CD8-positive, alpha-beta T cell (primary cell): ENCODE measurements at regions of chr7 and their contacts with region 1.

Region 1: DNA sequence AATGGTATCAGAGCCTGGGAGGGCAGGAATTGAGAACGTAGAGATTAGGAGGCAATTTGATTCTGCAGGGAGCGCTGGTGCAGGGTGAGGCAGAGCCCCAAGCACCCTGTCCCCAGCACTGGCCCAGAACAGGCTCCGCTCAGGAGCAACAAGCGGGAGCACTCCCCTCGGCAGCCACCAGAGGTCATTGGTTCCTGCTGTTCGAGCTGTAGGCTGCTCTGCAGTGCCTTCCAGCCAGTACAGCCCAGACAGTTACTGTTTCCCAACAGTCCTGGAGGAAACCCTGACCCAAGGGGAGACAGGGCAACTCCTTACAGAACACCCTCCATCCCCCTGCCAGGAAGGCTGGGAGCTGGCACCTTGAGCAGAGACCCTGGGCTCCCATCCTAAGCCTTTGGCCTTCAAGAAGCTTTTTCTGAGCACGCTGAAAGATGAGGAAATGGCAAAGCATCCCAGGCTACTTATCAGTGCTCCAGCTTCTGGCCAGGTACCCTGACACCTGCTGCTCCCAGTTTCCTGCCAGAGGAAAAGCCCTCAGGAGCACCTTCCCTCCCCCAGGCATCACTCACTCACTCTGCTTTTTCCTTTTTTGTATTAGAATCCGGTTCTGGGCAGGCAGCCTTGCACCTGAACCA is 71.2 kb upstream of the EFCAB10 start:
- DNase-seq: peak; percentile 34 to 73 (median 70)
- ATAC-seq: peak; percentile 92
- H3K4me3 ChIP-seq: no peak overlapping the region
- H3K4me3 Mint-ChIP-seq: no peak overlapping the region
- H3K27ac ChIP-seq: no peak overlapping the region
- H3K27ac Mint-ChIP-seq: no peak overlapping the region
- H3K4me1 ChIP-seq: no peaks in the 10 kb centered on the region
- H3K4me1 Mint-ChIP-seq: peaks cover 5% of the 10 kb centered on the region
- H3K27me3 ChIP-seq: no peaks in the 10 kb centered on the region
- H3K27me3 Mint-ChIP-seq: no peaks in the 10 kb centered on the region
- CTCF ChIP-seq: peak; percentile 70

Region 2: DNA sequence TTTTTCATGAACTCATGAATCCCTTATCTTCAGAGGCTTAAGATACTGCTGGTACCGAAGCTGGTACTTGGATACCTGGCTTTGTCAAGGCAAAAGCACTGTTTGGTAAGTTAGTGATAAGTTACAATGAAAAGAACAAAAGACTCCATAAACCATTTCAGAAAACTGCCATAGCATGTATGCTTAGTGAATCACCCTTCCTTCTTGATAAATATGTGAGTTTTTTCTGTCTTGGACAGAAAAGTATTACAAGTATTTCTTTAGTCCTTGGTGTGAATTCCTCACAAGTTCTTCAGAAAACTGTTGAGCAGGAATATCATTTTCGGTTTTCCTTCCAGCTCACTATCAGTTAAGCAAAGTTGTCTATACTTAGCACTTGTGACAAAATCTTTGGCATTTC is 156.0 kb before region 1 on chr7:
- CTCF ChIA-PET with region 1: no interaction called
- POLR2A ChIA-PET with region 1: no interaction called
- intact Hi-C with region 1: no loop called
- DNase-seq: no peak
- ATAC-seq: no peak
- H3K4me3 ChIP-seq: no peak overlapping the region
- H3K4me3 Mint-ChIP-seq: no peak overlapping the region
- H3K27ac ChIP-seq: no peak overlapping the region
- H3K27ac Mint-ChIP-seq: no peak overlapping the region
- H3K4me1 ChIP-seq: no peaks in the 10 kb centered on the region
- H3K4me1 Mint-ChIP-seq: no peaks in the 10 kb centered on the region
- H3K27me3 ChIP-seq: no peaks in the 10 kb centered on the region
- H3K27me3 Mint-ChIP-seq: no peaks in the 10 kb centered on the region
- CTCF ChIP-seq: no peak

Region 3: DNA sequence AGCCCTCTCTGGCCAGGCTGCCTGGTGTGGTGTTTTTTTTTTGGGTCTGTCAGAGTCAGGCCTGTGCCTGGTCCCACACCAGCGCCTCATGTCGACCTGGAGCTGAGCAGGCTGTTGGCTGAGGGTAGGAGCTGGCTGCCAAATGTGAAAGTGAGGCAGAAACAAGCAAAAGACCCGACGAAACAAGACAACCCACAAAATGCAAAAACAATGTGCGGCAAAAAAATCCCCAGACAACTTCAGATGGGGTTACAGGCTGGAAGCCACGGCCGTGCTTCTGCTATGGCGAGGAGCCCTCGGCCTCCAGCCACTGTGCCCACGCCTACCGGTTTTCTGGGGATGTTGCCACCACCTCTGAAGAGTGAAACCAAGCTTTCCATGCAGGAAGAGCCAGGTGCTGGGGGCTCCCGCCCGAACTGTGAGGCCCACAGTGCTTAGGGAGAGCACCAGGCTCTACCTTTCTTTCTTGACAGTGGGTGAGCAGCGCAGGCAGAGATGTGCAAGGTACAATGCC is 11.1 kb before region 1 on chr7:
- CTCF ChIA-PET with region 1: interaction called, 14 read pairs
- POLR2A ChIA-PET with region 1: no interaction called
- intact Hi-C with region 1: no loop called
- DNase-seq: peak in 1 of 9 experiments; percentile 8
- ATAC-seq: no peak
- H3K4me3 ChIP-seq: no peak overlapping the region
- H3K4me3 Mint-ChIP-seq: no peak overlapping the region
- H3K27ac ChIP-seq: no peak overlapping the region
- H3K27ac Mint-ChIP-seq: no peak overlapping the region
- H3K4me1 ChIP-seq: no peaks in the 10 kb centered on the region
- H3K4me1 Mint-ChIP-seq: no peaks in the 10 kb centered on the region
- H3K27me3 ChIP-seq: no peaks in the 10 kb centered on the region
- H3K27me3 Mint-ChIP-seq: no peaks in the 10 kb centered on the region
- CTCF ChIP-seq: no peak

Region 4: DNA sequence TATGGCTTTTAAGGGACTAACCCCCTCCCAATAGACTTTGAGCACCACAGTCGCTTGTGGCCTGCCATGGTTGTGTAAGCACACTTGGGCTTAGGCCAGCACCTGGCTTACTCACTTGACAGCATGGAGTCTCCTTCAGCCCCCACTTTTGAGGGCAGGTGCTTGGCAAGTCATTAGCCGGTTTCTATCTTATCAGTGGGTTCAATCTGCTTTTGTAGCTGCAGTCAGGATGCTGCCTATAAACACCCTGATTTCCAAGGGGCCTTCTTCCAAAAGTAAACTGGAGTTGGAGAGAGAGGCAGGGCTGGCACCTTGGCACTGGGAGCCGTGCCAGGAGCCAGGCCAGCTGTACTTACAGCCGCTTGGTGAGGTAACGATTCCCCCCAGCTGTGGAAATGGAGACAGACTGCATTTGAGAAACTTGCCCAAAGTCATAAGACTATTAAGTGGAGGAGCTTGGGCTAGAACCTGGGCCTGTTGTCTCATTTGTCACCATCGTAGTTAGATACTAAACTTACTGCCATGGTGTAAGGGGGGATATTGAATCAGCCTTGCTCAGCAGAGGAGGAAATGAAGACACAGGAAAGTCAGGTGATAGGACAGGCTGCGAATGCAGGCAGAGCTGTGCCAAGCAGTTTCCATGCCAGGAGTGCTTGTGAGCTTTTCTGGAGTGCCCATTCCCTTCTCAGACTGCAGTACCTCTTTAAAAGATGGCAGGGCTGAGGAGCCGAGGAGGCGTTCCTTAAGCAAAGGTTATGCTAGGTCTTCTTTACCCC is 21.1 kb after region 1 on chr7:
- CTCF ChIA-PET with region 1: interaction called, 16 read pairs
- POLR2A ChIA-PET with region 1: interaction called, 3 read pairs
- intact Hi-C with region 1: no loop called
- DNase-seq: no peak
- ATAC-seq: no peak
- H3K4me3 ChIP-seq: no peak overlapping the region
- H3K4me3 Mint-ChIP-seq: no peak overlapping the region
- H3K27ac ChIP-seq: peak overlapping the region in 1 of 2 experiments; percentile 15
- H3K27ac Mint-ChIP-seq: peak overlapping the region; percentile 71
- H3K4me1 ChIP-seq: peaks cover 37% of the 10 kb centered on the region
- H3K4me1 Mint-ChIP-seq: peaks cover 58% of the 10 kb centered on the region
- H3K27me3 ChIP-seq: no peaks in the 10 kb centered on the region
- H3K27me3 Mint-ChIP-seq: no peaks in the 10 kb centered on the region
- CTCF ChIP-seq: no peak

Region 5: GRCh38 chr7:105691733-105692564 is 39.5 kb after region 1 on chr7:
- CTCF ChIA-PET with region 1: interaction called, 6 read pairs
- POLR2A ChIA-PET with region 1: no interaction called
- intact Hi-C with region 1: loop called in 1 of 2 experiments (anchors 5 kb)
- DNase-seq: peak; percentile 45 to 91 (median 71)
- ATAC-seq: peak; percentile 75
- H3K4me3 ChIP-seq: peak overlapping the region; percentile 69 to 72
- H3K4me3 Mint-ChIP-seq: peak overlapping the region; percentile 93
- H3K27ac ChIP-seq: peak overlapping the region; percentile 85 to 96
- H3K27ac Mint-ChIP-seq: peak overlapping the region; percentile 98
- H3K4me1 ChIP-seq: peaks cover 34% of the 10 kb centered on the region
- H3K4me1 Mint-ChIP-seq: peaks cover 64% of the 10 kb centered on the region
- H3K27me3 ChIP-seq: no peaks in the 10 kb centered on the region
- H3K27me3 Mint-ChIP-seq: no peaks in the 10 kb centered on the region
- CTCF ChIP-seq: no peak

Region 6: GRCh38 chr7:105752671-105753275 is 100.3 kb after region 1 on chr7:
- CTCF ChIA-PET with region 1: interaction called, 13 read pairs
- POLR2A ChIA-PET with region 1: no interaction called
- intact Hi-C with region 1: loop called in 1 of 2 experiments (anchors 5 kb)
- DNase-seq: no peak
- ATAC-seq: no peak
- H3K4me3 ChIP-seq: no peak overlapping the region
- H3K4me3 Mint-ChIP-seq: no peak overlapping the region
- H3K27ac ChIP-seq: no peak overlapping the region
- H3K27ac Mint-ChIP-seq: no peak overlapping the region
- H3K4me1 ChIP-seq: no peaks in the 10 kb centered on the region
- H3K4me1 Mint-ChIP-seq: no peaks in the 10 kb centered on the region
- H3K27me3 ChIP-seq: no peaks in the 10 kb centered on the region
- H3K27me3 Mint-ChIP-seq: no peaks in the 10 kb centered on the region
- CTCF ChIP-seq: no peak

Region 7: DNA sequence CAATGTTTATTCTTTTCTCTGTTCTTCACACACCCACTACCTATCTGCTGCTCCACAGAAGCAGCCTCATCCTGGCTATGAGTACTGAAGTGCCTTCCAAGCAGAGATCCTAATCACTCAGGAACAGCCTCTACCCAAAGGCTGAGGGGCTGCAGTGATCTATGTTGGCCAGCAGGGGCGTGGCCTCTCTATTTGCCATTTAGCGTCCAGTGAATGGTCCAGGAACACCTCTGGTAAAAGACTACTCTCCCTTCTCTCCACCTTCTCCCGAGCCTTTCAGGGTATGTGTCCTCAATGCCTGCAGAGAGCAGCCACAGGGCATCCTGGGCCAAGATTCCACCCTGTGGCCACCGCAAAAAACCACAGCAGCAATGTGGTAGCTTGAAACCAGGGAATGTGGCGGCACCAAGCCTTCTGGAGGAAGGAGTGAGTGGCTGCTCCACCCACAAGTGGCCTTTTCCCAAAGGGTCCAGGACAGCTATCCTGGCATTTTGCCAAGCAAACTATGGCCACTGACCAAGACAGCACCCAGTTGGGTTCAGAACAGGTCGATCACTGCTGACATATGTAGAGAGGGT is 388.8 kb after region 1 on chr7:
- CTCF ChIA-PET with region 1: interaction called, 114 read pairs
- POLR2A ChIA-PET with region 1: no interaction called
- intact Hi-C with region 1: loop called (anchors 1 kb)
- DNase-seq: peak in 3 of 9 experiments; percentile 40 to 59 (median 51)
- ATAC-seq: peak; percentile 32
- H3K4me3 ChIP-seq: no peak overlapping the region
- H3K4me3 Mint-ChIP-seq: peak overlapping the region; percentile 6
- H3K27ac ChIP-seq: no peak overlapping the region
- H3K27ac Mint-ChIP-seq: peak overlapping the region; percentile 68
- H3K4me1 ChIP-seq: peaks cover 28% of the 10 kb centered on the region
- H3K4me1 Mint-ChIP-seq: peaks cover 39% of the 10 kb centered on the region
- H3K27me3 ChIP-seq: no peaks in the 10 kb centered on the region
- H3K27me3 Mint-ChIP-seq: no peaks in the 10 kb centered on the region
- CTCF ChIP-seq: peak; percentile 61

Region 8: GRCh38 chr7:107051376-107051775 is 1398.9 kb after region 1 on chr7:
- CTCF ChIA-PET with region 1: no interaction called
- POLR2A ChIA-PET with region 1: no interaction called
- intact Hi-C with region 1: no loop called
- DNase-seq: no peak
- ATAC-seq: no peak
- H3K4me3 ChIP-seq: no peak overlapping the region
- H3K4me3 Mint-ChIP-seq: no peak overlapping the region
- H3K27ac ChIP-seq: no peak overlapping the region
- H3K27ac Mint-ChIP-seq: no peak overlapping the region
- H3K4me1 ChIP-seq: no peaks in the 10 kb centered on the region
- H3K4me1 Mint-ChIP-seq: no peaks in the 10 kb centered on the region
- H3K27me3 ChIP-seq: peaks cover 0 to under 1% of the 10 kb centered on the region in 2 experiments
- H3K27me3 Mint-ChIP-seq: no peaks in the 10 kb centered on the region
- CTCF ChIP-seq: no peak